Activated T-helper 1 cell treated with anti-CD3 and anti-CD28 coated beads, Interleukin-12 subunit alpha, Interleukin-12 subunit beta, Interleukin-2, Interleukin-4 antibody, amounts not matched to agents 30 ng/mL and 10 ng/mL and 1 ng/mL, durations not matched to agents 14 hours and 24 hours and 36 hours (primary cell): ENCODE measurements at regions of chr10 and their contacts with region 1.

Region 1: GRCh38 chr10:14604181-14605142 is 170.2 kb downstream of the FAM107B start:
- DNase-seq: peak; percentile 72
- H3K4me3 Mint-ChIP-seq: peak overlapping the region; percentile 91
- H3K27ac Mint-ChIP-seq: peak overlapping the region; percentile 99
- H3K4me1 Mint-ChIP-seq: peaks cover 78% of the 10 kb centered on the region
- H3K27me3 Mint-ChIP-seq: no peaks in the 10 kb centered on the region

Region 2: DNA sequence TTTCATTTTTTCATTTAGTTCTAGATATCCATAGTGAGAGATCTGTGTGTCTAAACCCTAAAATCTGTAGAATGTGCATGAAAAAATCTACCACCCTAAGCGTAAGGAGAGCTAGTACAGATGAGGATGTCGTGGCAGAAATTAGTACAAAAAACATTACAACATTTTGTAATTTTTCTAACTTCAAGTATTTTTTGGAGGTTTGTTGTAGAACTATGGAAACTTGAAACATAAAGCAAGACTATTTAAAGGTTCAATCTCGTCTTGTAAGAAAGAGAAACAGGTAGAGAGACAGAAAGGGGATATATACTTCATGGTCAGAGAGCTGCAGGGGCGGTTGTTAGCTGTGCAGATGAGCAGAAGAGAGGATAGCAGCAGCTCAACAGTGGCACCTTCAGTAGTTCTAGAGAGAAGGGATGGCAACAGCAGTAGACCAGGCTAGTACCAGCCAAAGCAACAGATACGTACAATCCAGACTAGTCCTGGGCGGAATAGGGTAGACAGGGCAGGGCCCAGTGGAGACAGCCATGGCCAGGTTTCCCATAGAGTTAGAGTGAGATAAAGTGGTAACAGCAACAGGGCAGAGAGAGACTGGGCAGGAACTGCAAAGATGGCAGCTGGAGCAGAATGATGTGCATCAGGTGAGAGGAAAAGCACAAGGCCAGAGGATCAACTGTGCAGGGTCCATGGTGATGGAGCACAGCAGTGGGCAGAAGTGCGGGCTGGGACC is 419.0 kb before region 1 on chr10:
- intact Hi-C with region 1: loop called (anchors 1 kb)
- DNase-seq: peak; percentile 52
- H3K4me3 Mint-ChIP-seq: peak overlapping the region; percentile 46
- H3K27ac Mint-ChIP-seq: peak overlapping the region; percentile 92
- H3K4me1 Mint-ChIP-seq: peaks cover 20% of the 10 kb centered on the region
- H3K27me3 Mint-ChIP-seq: peaks cover 48% of the 10 kb centered on the region

Region 3: DNA sequence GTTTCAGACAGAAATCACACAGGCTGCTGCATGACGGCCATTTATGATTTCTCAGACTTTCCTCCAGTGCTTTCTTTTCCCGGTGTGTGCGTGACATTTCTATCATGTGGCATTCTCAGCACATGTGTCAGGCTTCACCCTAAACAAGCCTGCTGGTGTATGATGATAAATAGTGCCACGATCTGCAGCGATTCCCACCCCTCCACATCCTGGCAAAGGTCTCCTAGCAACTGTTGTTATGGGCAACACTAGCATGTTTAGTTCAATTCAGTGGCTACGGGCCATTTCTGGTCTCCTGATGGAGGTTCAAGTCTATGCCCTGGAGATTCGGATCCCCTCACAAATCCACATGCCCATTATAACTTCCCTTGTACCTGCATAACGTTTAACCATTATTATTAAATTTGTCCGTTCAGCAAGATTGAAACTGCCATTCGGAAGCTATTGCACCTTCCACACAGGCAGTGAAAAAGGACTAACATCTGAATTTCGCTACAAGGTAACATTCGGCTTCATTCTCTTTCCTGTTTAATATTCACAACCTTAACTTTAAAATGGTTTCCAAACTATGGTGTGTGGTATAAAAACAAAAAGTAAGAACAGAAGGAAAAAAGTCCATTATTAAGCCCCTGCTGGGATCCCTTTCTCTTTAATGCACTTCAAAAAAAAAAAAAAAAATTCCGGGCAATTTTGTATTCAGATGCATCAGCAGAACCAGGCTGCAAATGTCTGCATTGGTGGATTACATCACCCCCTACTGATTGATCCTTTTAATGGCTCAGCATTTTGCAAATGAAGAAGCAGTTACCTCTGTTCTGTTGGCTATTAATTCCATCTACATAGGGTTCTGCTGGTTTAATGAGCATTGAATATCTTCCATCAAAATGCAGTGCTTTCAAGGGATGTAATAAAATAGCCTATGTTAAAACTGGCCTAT is 363.9 kb before region 1 on chr10:
- intact Hi-C with region 1: no loop called
- DNase-seq: no peak
- H3K4me3 Mint-ChIP-seq: no peak overlapping the region
- H3K27ac Mint-ChIP-seq: no peak overlapping the region
- H3K4me1 Mint-ChIP-seq: no peaks in the 10 kb centered on the region
- H3K27me3 Mint-ChIP-seq: no peaks in the 10 kb centered on the region

Region 4: DNA sequence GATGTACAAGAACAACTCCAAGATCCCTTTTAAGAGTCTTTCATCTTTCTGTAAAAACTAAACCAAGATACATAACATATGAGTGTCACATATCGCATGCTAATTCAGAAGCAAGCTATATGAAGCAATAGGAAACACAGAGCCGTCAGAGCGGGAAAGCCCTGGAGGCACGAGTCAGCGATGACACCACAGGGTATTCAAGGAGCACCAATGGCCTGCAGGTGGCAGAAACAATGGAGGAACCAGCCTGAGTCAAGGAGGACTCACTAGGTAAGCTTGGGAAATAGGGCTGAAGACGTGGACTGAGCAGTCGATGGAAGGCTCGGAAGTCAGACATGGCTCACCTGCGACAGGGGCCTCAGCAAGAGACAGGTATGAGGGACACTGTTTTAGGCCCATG is 44.2 kb before region 1 on chr10:
- intact Hi-C with region 1: loop called (anchors 1 kb)
- DNase-seq: peak; percentile 59
- H3K4me3 Mint-ChIP-seq: peak overlapping the region; percentile 41
- H3K27ac Mint-ChIP-seq: peak overlapping the region; percentile 95
- H3K4me1 Mint-ChIP-seq: peaks cover 97% of the 10 kb centered on the region
- H3K27me3 Mint-ChIP-seq: no peaks in the 10 kb centered on the region

Region 5: GRCh38 chr10:14648005-14648765 is 43.7 kb after region 1 on chr10:
- intact Hi-C with region 1: loop called (anchors 1 kb)
- DNase-seq: peak; percentile 67
- H3K4me3 Mint-ChIP-seq: peak overlapping the region; percentile 73
- H3K27ac Mint-ChIP-seq: peak overlapping the region; percentile 98
- H3K4me1 Mint-ChIP-seq: peaks cover 61% of the 10 kb centered on the region
- H3K27me3 Mint-ChIP-seq: no peaks in the 10 kb centered on the region

Region 6: DNA sequence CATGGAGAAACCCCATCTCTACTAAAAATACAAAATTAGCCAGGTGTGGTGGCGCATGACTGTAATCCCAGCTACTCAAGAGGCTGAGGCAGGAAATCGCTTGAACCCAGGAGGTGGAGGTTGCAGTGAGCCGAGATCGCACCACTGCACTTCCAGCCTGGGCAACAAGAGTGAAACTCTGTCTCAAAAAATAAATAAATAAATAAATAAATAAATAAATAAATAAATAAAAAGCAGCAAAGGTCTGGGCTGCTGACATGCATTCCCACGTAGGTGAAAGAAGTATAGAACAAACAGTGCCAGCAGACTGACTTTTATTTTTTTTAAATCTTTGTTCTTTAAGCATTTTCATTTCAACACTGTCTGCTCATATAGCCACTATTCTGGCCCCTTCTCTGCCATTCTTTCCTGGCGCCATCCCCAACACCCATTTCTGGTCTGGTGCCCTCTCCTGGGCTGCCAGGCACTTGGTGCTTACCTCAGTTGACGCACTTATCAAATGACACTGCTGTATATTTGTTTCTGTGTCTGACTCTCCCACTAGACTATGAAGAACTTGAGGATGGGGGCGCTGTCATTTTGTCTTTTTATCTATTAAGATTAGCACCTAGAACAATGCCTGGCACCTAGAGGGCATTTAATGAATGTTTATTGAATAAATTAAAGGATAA is 154.7 kb after region 1 on chr10:
- intact Hi-C with region 1: loop called (anchors 5 kb)
- DNase-seq: no peak
- H3K4me3 Mint-ChIP-seq: no peak overlapping the region
- H3K27ac Mint-ChIP-seq: no peak overlapping the region
- H3K4me1 Mint-ChIP-seq: peaks cover 8% of the 10 kb centered on the region
- H3K27me3 Mint-ChIP-seq: no peaks in the 10 kb centered on the region

Region 7: DNA sequence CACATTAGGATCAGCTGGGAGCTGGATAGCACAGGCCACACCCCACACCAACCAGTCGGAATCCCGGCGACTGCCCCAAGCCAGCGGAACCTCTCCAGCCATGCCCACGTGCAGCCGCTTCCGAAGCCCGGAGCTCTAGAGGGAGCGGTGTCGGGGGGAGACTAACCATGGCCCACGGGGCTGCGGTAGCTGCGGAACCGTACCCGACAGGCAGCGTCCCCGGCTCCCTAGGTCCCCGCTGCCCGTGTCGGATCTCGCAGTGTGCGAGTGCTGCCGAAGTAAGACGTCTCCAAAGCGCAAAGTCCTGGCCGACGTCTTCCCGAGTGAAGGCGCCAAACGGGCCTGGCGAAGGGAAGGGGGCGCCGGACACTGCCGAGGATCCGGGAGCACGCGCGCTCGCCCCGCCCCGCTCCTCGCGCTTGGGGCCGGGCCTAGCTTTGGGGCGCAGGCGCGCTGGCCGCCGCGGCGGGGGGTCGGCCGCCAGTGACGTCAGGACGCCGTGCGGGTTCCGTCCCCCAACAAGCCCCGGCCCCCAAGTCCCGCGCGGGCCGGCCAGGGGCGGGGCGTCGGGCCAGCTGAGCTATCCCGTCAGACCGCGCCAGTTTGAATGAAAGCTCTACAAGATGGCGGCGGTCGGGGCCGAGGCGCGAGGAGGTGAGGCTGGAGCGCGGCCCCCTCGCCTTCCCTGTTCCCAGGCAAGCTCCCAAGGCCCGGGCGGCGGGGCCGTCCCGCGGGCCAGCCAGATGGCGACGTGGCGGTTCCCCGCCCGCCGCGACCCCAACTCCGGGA is 274.0 kb after region 1 on chr10 and contains the start of gene SUV39H2:
- intact Hi-C with region 1: loop called (anchors 1 kb)
- DNase-seq: peak; percentile 95
- H3K4me3 Mint-ChIP-seq: peak within 1 kb of the TSS; percentile 96
- H3K27ac Mint-ChIP-seq: peak within 1 kb of the TSS; percentile 94
- H3K4me1 Mint-ChIP-seq: peaks cover 50% of the 10 kb centered on the region
- H3K27me3 Mint-ChIP-seq: no peaks in the 10 kb centered on the region
- total RNA-seq, gene SUV39H2: 43.3 and 51.7 TPM in 2 replicates